ENCODE measurements at regions of chr17 and their contacts with region 1.

Region 1: GRCh38 chr17:39972271-39972670 is 8.3 kb upstream of the PSMD3 start:
- DNase-seq: no peak
- H3K4me3 ChIP-seq: no peak overlapping the region
- H3K27ac ChIP-seq: no peak overlapping the region
- H3K27me3 ChIP-seq: peaks cover 10% of the 10 kb centered on the region
- CTCF ChIP-seq: no peak

Region 2: DNA sequence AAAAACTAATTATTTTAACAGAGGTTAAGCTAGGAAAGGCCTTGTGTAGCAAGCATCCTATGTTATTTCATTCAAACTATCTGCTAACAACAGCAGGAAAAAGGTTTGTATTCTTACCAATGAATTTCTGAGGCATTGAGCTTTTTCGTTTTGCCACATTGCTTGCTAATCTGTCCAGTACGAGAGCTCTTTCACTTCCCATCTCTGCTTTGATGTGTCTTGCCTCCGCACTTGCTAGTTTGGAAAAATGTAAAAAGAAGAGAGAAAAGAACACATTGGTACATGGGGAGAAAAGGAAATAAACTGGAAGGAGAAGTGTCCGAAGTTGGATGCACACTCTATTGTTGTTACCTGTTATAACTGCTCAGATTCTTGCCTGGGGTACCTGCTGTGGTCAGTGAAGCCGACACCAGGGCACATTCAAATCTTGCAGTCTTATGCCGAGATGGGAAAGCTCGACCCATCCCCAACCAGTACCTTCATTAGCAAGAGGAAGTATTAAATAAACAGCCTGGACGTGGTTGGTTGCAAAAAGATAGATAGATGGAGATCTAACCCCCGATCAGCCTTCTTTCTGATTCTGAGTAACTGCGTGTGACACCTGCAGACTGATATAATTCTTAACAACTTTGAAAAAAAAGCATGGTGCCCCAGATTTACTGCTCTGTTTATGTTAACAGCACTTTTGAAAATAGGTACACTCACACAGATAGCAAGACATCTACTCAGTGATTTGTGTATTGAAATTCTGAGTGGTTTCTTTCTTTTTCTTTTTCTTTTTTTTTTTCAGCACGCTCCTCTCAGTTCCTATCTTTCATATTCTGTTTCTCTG is 194.5 kb before region 1 on chr17:
- CTCF ChIA-PET with region 1: no interaction called
- POLR2A ChIA-PET with region 1: no interaction called
- DNase-seq: no peak
- H3K4me3 ChIP-seq: no peak overlapping the region
- H3K27ac ChIP-seq: no peak overlapping the region
- H3K27me3 ChIP-seq: peaks cover 69% of the 10 kb centered on the region
- CTCF ChIP-seq: no peak

Region 3: DNA sequence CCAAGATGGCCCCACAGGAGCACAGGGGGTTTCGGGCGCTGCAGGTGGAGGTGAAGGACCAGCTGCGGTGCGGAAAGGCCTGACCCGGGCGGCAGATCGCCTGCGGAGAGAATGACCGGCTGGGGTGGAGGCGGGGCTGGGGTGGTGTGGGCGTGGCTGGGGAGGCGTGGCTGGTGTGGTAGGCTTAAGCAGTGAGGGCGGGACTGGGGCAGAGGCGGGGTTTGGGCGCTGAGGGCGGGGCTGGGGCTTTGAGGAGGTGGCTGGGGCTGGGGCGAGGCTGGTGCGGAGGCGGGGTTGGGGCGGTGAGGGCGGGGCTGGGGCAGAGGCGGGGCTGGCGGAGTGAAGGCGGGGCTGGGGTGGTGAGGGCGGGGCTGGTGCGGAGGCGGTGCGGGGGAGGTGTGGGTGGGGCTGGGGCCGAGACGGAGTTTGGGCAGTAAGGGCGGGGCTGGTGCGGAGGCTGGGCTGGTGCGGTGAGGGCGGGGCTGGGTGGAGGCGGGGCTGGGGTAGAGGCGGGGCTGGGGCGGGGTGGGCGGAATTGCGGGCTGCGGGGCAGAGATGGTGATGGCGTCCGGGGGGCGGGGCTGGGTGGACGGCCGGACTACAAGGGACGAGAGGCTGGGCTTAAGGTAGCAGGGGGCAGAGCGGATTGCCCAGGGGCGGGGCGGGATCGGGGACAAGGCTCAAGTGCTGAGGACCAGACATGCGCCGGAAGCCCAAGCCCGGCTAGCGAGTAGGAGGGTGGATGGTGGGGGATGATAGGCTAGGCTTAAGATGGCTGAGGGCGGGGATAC is 19.4 kb before region 1 on chr17:
- CTCF ChIA-PET with region 1: interaction called, 11 read pairs
- POLR2A ChIA-PET with region 1: no interaction called
- DNase-seq: peak; percentile 82
- H3K4me3 ChIP-seq: peak overlapping the region; percentile 57
- H3K27ac ChIP-seq: peak overlapping the region; percentile 2
- H3K27me3 ChIP-seq: peaks cover 10% of the 10 kb centered on the region
- CTCF ChIP-seq: no peak

Region 4: GRCh38 chr17:39996800-39997199 is 24.5 kb after region 1 on chr17:
- CTCF ChIA-PET with region 1: no interaction called
- POLR2A ChIA-PET with region 1: no interaction called
- DNase-seq: no peak
- H3K4me3 ChIP-seq: no peak overlapping the region
- H3K27ac ChIP-seq: no peak overlapping the region
- H3K27me3 ChIP-seq: no peaks in the 10 kb centered on the region
- CTCF ChIP-seq: no peak

Measured in AG04450 (cell line).